Psoas muscle (tissue), 8 donors: ENCODE measurements at regions of chr7 and their contacts with region 1.

Region 1: DNA sequence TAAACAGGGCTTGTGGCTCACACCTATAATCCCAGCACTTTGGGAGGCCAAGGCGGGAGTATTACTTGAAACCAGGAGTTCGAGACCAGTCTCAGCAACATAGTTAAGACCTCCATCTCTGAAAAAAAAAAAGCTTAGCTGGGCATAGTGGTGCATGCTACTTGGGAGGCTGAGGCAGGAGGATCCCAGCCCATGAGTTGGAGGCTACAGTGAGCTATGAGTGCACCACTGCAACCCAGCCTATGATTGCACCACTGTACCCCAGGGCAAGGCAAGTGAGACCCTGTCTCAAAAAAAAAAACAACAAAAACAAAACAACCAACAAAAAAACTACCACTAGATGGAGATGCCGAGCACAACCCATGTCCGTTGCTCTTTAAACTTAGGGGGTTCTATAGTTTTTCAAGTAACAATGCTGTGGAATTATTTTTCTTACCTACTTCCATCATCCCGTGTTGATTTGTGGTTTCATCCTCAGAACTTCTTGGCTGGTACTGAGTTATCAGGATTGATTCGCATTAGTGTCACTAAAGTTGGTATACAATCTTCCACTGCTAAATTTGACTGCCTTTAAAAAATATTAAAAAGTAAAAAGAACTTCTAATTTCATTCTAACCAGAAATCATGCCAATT is 12.2 kb upstream of the REPIN1 start:
- DNase-seq: no peak
- ATAC-seq: peak in 2 of 4 donors; percentile 59 to 63
- H3K4me3 ChIP-seq: no peak overlapping the region
- H3K27ac ChIP-seq: no peak overlapping the region
- H3K4me1 ChIP-seq: peaks cover 5% of the 10 kb centered on the region
- H3K27me3 ChIP-seq: no peaks in the 10 kb centered on the region
- CTCF ChIP-seq: peak; percentile 67

Region 2: GRCh38 chr7:149826872-149827714 is 529.3 kb before region 1 on chr7:
- intact Hi-C with region 1: no loop called
- DNase-seq: peak in 1 of 2 donors; percentile 34
- ATAC-seq: no peak
- H3K4me3 ChIP-seq: no peak overlapping the region
- H3K27ac ChIP-seq: no peak overlapping the region
- H3K4me1 ChIP-seq: no peaks in the 10 kb centered on the region
- H3K27me3 ChIP-seq: peaks cover 0 to 5% (median 0%) of the 10 kb centered on the region in 3 donors
- CTCF ChIP-seq: no peak

Region 3: DNA sequence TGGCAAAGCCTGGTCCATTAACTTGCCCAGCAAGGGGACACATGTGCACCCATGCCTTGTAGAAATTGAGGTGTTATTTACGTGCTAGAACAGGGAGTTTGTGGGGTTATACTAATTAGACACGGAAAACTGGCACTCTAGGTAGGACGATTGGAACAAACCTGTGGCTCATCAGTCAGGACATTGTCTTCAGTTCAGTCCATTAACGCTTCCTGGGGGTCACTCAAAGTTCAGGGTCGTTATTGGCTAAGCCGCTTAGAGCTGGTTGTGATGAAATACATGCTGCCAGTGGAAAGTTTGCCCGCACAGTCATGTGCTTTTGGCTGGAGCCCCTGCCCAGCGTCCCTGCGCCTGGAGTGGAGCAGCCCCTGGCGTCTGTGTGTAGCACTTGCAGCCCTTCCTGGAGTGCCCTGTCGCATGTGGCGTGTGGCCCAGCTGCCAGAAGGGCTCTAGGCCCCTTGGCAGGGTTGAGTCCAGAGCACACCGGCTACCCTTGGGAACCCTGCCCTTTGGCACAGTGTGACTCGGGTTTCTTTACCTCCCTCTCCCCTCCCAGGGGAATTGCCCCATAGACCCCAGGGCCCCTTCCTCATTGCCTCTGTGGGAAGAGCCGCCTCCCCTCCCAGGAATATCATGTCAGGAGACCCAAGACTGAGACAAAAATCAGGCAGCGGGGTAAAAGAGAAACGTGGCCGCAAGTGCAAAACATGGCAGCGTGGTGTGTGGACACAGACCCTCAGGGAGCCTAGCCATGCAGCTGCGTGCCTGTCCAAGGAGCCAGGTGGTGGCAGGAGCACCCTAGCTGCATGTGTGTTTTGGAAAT is 32.5 kb after region 1 on chr7:
- intact Hi-C with region 1: loop called in 1 of 2 experiments (anchors 2 kb)
- DNase-seq: peak; percentile 83 to 93
- ATAC-seq: peak; percentile 98 to 99 (median 99)
- H3K4me3 ChIP-seq: peak overlapping the region; percentile 36
- H3K27ac ChIP-seq: peak overlapping the region; percentile 53
- H3K4me1 ChIP-seq: peaks cover 32% of the 10 kb centered on the region
- H3K27me3 ChIP-seq: no peaks in the 10 kb centered on the region
- CTCF ChIP-seq: peak; percentile 91

Region 4: GRCh38 chr7:150420987-150421674 is 64.8 kb after region 1 on chr7:
- intact Hi-C with region 1: loop called in 1 of 2 experiments (anchors 2 kb)
- DNase-seq: peak; percentile 77 to 88
- ATAC-seq: peak; percentile 91 to 100 (median 96)
- H3K4me3 ChIP-seq: peak overlapping the region; percentile 6
- H3K27ac ChIP-seq: no peak overlapping the region
- H3K4me1 ChIP-seq: no peaks in the 10 kb centered on the region
- H3K27me3 ChIP-seq: no peaks in the 10 kb centered on the region
- CTCF ChIP-seq: peak; percentile 86